ENCODE measurements at regions of chr15 and their contacts with region 1.

Region 1: DNA sequence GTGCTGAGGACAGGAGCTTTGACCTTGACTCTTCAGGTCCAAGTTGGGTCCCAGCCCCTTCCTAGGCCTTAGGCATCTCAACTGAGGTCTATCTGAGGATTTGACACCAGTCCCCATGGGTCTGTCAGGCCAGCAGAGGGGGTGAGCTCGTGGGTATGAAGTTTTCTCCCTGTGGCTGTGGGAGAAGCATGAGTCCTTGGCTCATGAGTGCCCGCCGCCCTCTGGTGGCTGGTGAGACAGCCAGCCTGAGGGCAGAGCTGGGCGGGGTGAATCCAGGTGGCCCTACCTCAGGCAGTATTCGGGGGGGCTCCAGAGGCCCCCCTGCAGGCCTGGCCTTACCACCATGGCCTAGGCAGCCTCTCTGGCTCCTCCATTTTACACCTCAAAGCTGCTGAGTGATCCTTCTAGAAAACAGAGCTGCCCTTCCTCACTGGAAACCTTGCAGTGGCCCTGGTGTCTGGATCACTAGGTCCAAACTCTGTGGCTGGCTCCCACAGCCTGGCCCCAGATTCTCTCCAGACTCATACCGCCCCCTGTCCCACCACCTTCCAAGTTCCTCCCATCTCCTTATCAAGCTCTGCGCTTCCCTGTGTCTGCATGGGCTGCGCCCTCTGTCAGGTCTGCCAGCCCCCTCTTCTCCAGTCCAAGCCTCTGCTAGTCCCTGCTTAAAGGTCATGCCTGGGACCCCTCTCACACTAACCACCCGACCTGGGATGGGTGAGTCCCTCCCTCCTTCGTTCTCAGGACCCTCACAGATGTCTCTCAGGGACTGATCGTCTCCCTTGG is 16.1 kb downstream of the SH2D7 start:
- DNase-seq: peak; percentile 88
- H3K4me3 ChIP-seq: no peak overlapping the region
- H3K27ac ChIP-seq: no peak overlapping the region
- H3K4me1 ChIP-seq: peaks cover 0 to 8% (median 4%) of the 10 kb centered on the region in 4 donors
- H3K27me3 ChIP-seq: no peaks in the 10 kb centered on the region
- CTCF ChIP-seq: peak; percentile 91 to 98 (median 97)
- EP300 ChIP-seq: no peak
- POLR2A ChIP-seq: no peak

Region 2: DNA sequence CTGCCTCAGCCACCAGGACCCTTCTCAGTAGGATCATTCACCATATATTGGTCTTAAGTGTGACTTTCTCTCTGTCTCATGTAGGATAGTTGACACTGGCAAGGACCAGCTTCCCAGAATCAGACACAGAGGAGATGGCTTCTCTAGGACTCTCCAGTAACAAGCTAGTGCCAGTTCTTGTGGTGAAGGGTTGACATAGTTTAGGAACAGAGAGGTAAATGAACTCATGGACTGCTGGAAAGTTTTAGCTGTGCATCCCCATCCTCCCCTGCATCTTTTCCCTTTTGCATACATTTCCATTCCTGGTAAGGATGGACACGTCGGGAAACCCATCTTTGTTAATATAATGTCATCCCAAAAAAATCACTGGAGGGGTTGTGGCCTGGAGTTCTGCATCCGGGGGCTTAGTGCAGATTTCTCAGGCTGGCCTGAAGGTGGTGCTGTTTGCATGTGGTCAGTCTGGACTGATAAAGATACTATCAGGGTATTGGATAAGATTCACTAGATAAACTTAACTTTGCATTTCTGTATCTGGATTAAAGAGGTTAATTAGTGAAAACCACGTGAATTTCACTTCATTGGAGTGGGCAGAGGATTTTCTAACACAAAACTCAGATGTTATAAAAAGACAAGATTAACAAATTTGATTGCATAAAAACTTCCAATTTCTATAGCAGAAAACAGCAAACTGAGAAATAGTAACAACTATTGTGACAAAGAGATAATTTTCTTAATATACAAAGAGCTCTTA is 141.8 kb before region 1 on chr15:
- in situ Hi-C with region 1: loop called (anchors 5 to 10 kb)
- intact Hi-C with region 1: loop called (anchors 5 kb)
- DNase-seq: peak; percentile 46
- H3K4me3 ChIP-seq: no peak overlapping the region
- H3K27ac ChIP-seq: no peak overlapping the region
- H3K4me1 ChIP-seq: no peaks in the 10 kb centered on the region
- H3K27me3 ChIP-seq: no peaks in the 10 kb centered on the region
- CTCF ChIP-seq: peak; percentile 74 to 84 (median 80)
- EP300 ChIP-seq: no peak
- POLR2A ChIP-seq: no peak

Region 3: DNA sequence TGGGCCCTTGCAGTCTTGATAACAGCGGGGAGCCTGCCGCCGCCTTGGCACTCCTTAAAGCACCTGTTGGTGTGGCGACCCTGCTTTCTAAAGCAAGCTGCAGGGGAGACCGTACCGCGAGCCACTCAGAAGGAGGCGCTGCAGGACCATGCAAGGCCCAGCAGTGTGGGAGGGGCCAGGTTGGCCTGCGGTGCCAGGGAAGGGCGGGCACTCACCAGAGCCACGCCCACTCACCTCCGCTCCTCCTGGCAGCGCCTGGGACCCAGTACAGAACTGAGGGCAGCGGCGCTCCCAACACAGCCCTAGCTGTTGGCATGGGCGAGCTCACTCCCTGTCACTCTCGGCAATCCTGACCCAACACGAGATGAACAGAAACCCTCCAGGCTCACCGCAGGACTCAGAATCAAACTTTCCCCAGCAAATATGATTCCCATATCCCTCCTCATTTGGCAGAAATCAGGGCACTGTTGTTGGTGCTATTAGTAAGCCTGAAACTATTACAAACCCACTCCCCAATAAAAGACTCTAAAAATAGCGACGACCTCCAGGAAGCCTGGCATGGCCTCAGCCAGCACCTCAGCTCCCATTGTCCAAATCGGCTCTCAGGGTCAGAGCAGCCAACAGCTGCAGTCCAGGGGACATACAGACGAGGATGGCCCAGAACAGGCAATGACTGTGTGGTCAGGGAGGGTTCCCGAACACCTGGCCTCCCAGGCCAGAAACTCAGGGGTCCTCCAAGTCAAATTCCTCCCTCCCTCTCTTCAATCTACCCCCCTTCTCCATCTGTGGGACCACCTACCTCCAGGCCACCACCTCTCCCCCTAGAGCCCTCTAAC is 108.2 kb before region 1 on chr15:
- in situ Hi-C with region 1: loop called in 1 of 4 experiments (anchors 10 kb)
- intact Hi-C with region 1: loop called (anchors 5 kb)
- DNase-seq: peak; percentile 94
- H3K4me3 ChIP-seq: no peak overlapping the region
- H3K27ac ChIP-seq: peak overlapping the region in 3 of 4 donors; percentile 5 to 21 (median 13)
- H3K4me1 ChIP-seq: peaks cover 7 to 21% (median 14%) of the 10 kb centered on the region in 4 donors
- H3K27me3 ChIP-seq: no peaks in the 10 kb centered on the region
- CTCF ChIP-seq: peak; percentile 69 to 94 (median 81)
- EP300 ChIP-seq: no peak
- POLR2A ChIP-seq: no peak

Region 4: DNA sequence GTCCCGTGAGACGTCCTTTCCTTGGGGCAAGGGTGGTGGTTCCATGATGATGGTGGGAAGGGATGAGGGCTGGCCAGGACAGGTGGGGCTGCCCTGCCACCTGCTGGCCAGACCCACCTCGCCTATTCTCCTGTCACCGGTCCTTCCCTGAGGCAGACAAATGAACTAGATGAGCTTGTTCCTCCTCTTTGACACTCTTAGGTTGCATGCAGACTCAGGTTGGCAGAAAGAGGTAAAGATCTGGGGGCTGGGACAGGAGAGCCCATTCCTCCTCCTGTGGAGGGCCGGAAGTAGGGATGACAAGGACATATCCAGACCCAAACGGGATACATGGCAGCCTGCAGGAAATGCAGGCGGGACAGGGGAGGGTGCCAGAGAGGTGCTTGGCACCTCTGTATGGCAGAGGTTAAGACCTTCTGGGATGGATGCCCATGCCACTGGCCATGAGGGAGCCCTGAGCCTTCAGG is 87.3 kb after region 1 on chr15:
- in situ Hi-C with region 1: loop called in 3 of 4 experiments (anchors 5 to 10 kb)
- intact Hi-C with region 1: no loop called
- DNase-seq: peak; percentile 59
- H3K4me3 ChIP-seq: no peak overlapping the region
- H3K27ac ChIP-seq: no peak overlapping the region
- H3K4me1 ChIP-seq: no peaks in the 10 kb centered on the region
- H3K27me3 ChIP-seq: no peaks in the 10 kb centered on the region
- CTCF ChIP-seq: peak; percentile 68 to 86 (median 72)
- EP300 ChIP-seq: no peak
- POLR2A ChIP-seq: no peak

Region 5: DNA sequence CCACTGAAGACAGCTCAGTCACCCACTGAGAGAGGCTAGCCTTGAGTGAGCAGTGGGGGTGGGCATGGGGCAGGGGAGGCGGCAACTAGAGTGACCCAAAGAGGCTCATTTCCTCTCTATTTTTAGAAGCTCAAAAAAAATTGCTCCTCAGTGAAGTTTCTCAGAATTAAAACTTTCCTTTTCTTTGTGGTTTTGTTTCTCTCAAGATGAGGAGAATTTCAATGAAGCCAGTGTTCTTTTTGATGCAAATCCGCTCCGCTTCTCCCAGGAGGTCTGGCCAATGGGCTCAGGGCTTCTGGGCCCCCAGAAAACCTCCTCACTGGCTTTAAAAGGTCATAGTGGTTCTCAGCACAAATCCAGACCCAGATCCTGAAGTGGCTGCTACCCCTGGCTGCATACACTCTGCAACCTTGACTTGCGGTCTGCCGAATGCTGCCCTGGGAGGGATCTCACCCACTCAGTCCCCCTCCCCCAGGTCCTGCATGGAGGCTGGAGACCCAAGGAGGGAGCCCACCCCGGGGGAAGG is 126.1 kb after region 1 on chr15 and contains the start of gene ACSBG1:
- in situ Hi-C with region 1: loop called in 2 of 4 experiments (anchors 5 to 25 kb)
- intact Hi-C with region 1: no loop called
- DNase-seq: no peak
- H3K4me3 ChIP-seq: no peak within 1 kb of the TSS
- H3K27ac ChIP-seq: no peak within 1 kb of the TSS
- H3K4me1 ChIP-seq: no peaks in the 10 kb centered on the region
- H3K27me3 ChIP-seq: no peaks in the 10 kb centered on the region
- CTCF ChIP-seq: no peak
- EP300 ChIP-seq: no peak
- POLR2A ChIP-seq: no peak
- total RNA-seq, gene ACSBG1: 1.5 TPM in 1 of 4 donors, not detected in the others

Region 6: DNA sequence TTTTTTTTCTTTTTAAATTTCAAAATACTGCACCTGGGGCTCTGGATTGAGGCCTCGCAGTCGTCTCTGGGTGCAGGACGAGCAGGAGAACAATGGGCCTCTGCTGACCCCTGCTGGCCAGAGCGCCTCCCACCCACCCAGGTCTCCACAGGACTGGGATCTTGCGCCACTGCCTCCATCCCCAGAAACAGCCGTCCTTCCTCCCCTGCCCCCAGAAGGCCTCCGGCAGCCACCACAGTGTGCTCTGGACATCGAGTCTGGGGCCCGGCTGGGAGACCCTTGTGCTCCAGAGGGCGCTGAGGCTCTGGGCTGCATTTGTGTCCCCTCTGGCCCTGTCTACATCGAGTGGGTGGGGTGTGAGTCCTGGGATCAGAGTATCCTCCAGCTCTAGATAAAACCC is 132.5 kb after region 1 on chr15:
- in situ Hi-C with region 1: loop called in 2 of 4 experiments (anchors 5 to 25 kb)
- intact Hi-C with region 1: loop called (anchors 5 kb)
- DNase-seq: peak; percentile 91
- H3K4me3 ChIP-seq: no peak overlapping the region
- H3K27ac ChIP-seq: no peak overlapping the region
- H3K4me1 ChIP-seq: peaks cover 0 to 25% (median 19%) of the 10 kb centered on the region in 4 donors
- H3K27me3 ChIP-seq: no peaks in the 10 kb centered on the region
- CTCF ChIP-seq: peak; percentile 85 to 89 (median 87)
- EP300 ChIP-seq: no peak
- POLR2A ChIP-seq: no peak